ENCODE measurements at regions of chr19 and their contacts with region 1.

Region 1: GRCh38 chr19:49391581-49392399 is 3.7 kb downstream of the KASH5 start:
- DNase-seq: peak; percentile 57 to 91
- ATAC-seq: peak; percentile 72 to 79 (median 77)
- H3K4me3 ChIP-seq: no peak overlapping the region
- H3K4me3 Mint-ChIP-seq: no peak overlapping the region
- H3K27ac ChIP-seq: peak overlapping the region; percentile 26
- H3K27ac Mint-ChIP-seq: peak overlapping the region in 1 of 2 donors; percentile 23
- H3K4me1 ChIP-seq: peaks cover 37% of the 10 kb centered on the region
- H3K4me1 Mint-ChIP-seq: peaks cover 11 to 26% of the 10 kb centered on the region in 2 donors
- H3K27me3 ChIP-seq: no peaks in the 10 kb centered on the region
- H3K27me3 Mint-ChIP-seq: peaks cover 0 to 7% of the 10 kb centered on the region in 2 donors
- CTCF ChIP-seq: peak; percentile 85

Region 2: DNA sequence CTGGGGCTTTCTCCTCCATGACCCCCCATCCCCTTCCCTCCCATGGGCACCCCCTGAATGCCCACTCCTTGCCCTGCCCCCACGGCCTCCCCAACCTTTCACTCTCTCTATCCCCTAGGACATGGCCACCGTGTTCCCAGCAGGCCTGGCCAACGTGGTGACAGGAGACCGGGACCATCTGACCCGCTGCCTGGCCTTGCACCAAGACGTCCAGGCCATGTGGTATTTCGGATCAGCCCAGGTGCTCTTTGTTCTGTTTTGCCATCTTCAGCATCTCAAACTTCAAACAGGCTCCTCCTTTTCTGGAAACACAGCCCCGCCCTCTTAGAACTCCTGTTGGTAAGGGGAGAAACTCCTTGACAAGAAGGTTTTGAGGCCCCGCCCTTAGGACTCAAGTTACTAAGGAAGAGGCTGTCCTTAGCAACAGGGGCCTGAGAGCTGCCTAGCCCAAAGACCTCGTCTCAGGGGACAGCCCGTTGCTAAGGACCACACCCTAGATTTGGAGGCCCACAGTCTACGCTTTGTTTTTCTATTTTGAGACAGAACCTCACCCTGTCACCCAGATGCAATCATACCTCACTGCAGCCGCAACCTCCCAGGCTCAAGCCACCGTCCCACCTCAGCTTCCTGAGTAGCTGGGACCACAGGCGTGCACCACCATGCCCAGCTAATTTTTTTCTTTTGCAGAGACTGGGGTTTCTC is 77.1 kb after region 1 on chr19:
- intact Hi-C with region 1: loop called (anchors 1 kb)
- DNase-seq: peak; percentile 81 to 97
- ATAC-seq: peak; percentile 64 to 87 (median 72)
- H3K4me3 ChIP-seq: no peak overlapping the region
- H3K4me3 Mint-ChIP-seq: peak overlapping the region; percentile 86
- H3K27ac ChIP-seq: peak overlapping the region; percentile 97
- H3K27ac Mint-ChIP-seq: peak overlapping the region; percentile 92 to 97
- H3K4me1 ChIP-seq: peaks cover 60% of the 10 kb centered on the region
- H3K4me1 Mint-ChIP-seq: peaks cover 21 to 37% of the 10 kb centered on the region in 2 donors
- H3K27me3 ChIP-seq: no peaks in the 10 kb centered on the region
- H3K27me3 Mint-ChIP-seq: no peaks in the 10 kb centered on the region
- CTCF ChIP-seq: no peak